Ascending aorta (tissue), 2 donors: ENCODE measurements at regions of chr2 and their contacts with region 1.

Region 1: DNA sequence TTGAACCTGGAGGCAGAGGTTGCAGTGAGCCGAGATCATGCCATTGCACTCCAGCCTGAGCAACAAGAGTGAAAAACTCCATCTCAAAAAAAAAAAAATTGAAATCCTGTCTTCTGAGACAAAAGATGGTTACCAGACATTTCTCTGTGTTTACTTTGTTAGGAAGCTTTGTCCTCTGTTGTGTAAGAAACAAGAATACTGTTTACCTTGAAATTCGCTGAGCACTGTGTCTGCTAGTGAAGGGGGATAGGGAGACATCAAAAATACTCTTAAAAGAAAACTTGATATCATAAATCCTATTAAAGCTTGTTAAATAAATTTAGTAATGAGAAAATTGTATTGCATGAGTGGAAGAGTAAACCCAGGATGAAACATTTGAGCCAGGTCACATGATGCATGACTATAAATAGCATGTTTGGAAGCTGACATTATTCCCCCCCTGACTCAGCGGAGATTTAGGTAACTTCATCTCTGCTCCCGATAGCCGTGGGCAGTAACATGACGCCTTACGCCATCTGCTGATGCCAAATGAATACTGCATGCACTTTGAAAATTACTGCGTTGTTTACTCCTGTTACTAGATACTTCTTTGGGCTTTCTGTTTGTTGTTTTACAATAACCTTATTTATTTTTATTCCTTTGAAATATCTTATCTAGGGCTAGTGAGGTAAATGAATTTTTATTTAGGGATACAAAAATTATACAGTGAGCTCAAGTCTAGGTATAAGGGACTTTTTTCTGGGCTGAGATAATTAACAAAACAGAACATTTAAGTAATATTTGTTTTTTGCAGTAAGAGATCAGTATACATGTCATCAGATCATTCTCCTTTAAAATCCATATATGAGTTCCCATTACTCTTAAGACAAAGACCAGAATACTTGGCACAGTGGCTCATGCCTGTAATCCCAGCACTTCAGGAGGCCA is 134.9 kb downstream of the MAP3K20 start:
- DNase-seq: peak in 1 of 2 donors; percentile 90
- H3K4me3 ChIP-seq: no peak overlapping the region
- H3K27ac ChIP-seq: peak overlapping the region; percentile 50 to 56
- H3K4me1 ChIP-seq: peaks cover 15 to 23% of the 10 kb centered on the region in 2 donors
- H3K27me3 ChIP-seq: no peaks in the 10 kb centered on the region
- CTCF ChIP-seq: peak; percentile 80 to 88 (median 87)

Region 2: DNA sequence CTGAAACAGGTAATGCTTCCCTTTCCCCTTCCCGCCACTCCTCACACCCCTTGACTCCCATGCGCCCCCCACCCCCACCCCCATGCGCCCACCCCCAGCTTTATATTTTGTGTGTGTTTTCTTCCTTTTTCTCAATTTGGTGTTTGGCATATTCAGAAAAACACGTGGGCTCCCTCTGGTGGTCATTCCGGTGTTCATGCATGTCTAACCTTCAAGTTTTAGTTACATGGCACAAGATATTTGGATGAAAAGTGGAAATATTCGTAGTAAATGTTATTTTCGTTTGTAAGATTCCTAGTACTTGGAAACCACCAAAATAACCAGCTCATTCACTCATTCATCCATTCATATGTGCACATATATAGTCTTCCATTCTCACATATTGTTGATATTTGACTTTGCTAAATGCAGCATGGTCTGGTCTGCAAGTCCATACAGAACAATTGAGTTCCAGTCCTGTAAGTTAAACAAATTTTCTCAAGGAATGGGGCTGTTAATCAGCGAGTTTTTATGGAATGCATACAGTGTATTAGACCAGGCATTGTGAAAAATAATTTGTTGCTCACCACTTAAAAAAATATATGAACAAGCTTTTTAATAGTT is 278.5 kb before region 1 on chr2:
- intact Hi-C with region 1: loop called (anchors 5 kb)
- DNase-seq: peak in 1 of 2 donors; percentile 76
- H3K4me3 ChIP-seq: peak overlapping the region; percentile 27 to 44
- H3K27ac ChIP-seq: peak overlapping the region; percentile 58 to 62
- H3K4me1 ChIP-seq: peaks cover 2 to 20% of the 10 kb centered on the region in 2 donors
- H3K27me3 ChIP-seq: no peaks in the 10 kb centered on the region
- CTCF ChIP-seq: peak; percentile 26 to 81 (median 75)

Region 3: GRCh38 chr2:173075781-173076580 is 134.6 kb before region 1 on chr2 and contains the start of gene MAP3K20:
- intact Hi-C with region 1: loop called (anchors 1 kb)
- DNase-seq: peak; percentile 42 to 89
- H3K4me3 ChIP-seq: peak within 1 kb of the TSS; percentile 75 to 92
- H3K27ac ChIP-seq: peak within 1 kb of the TSS; percentile 96 to 100
- H3K4me1 ChIP-seq: peaks cover 3 to 23% of the 10 kb centered on the region in 2 donors
- H3K27me3 ChIP-seq: no peaks in the 10 kb centered on the region
- CTCF ChIP-seq: peak; percentile 16 to 49 (median 30)
- total RNA-seq, gene MAP3K20: 21.3 TPM

Region 4: GRCh38 chr2:173159794-173160463 is 50.6 kb before region 1 on chr2:
- intact Hi-C with region 1: loop called (anchors 2 kb)
- DNase-seq: peak; percentile 90 to 98
- H3K4me3 ChIP-seq: no peak overlapping the region
- H3K27ac ChIP-seq: peak overlapping the region; percentile 62 to 79
- H3K4me1 ChIP-seq: peaks cover 6 to 14% of the 10 kb centered on the region in 2 donors
- H3K27me3 ChIP-seq: no peaks in the 10 kb centered on the region
- CTCF ChIP-seq: no peak